ENCODE measurements at regions of chr11 and their contacts with region 1.

Region 1: DNA sequence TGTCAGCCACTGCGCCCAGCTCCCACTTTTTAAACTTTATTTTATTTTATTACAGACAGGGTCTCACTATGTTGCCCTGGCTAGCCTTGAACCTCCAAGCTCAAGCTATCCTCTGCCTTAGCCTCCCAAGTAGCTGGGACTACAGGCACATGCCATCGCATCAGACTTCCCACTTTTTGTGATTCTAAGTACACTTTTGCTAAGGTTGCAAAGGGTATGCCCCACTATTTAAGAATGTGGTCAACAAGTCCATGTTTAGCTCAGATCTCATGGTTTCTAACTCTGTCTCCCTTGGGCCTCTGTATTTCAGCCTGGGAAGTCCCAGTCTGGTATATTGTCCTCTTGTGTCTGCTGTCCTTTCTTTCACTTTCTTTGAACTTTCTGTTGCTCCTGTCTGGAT is 35.3 kb downstream of the EXPH5 start:
- DNase-seq: no peak
- H3K4me3 ChIP-seq: no peak overlapping the region
- H3K27ac ChIP-seq: no peak overlapping the region
- H3K4me1 ChIP-seq: no peaks in the 10 kb centered on the region
- H3K27me3 ChIP-seq: no peaks in the 10 kb centered on the region
- CTCF ChIP-seq: no peak

Region 2: DNA sequence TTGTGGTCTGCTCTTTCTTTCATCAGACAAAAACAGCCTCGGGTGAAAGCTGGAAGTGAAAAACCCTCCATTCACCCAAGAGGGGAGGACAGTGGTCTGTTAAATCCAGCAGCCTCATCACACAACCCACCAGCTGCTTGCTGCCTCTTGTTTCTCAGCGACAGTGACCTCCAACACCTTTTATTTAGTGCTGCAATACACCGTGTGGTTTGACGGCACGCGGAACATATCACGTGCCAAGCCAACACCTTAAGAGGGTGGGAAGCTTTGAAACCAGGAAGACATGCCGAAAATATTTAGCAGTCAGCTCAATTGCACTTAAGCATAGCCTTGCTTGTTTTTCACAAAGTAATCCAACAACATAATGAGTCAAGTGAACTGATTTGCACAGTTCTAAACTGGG is 20.2 kb before region 1 on chr11:
- CTCF ChIA-PET with region 1: no interaction called
- POLR2A ChIA-PET with region 1: interaction called, 12 read pairs
- intact Hi-C with region 1: no loop called
- DNase-seq: peak in 1 of 2 experiments; percentile 23
- H3K4me3 ChIP-seq: no peak overlapping the region
- H3K27ac ChIP-seq: no peak overlapping the region
- H3K4me1 ChIP-seq: no peaks in the 10 kb centered on the region
- H3K27me3 ChIP-seq: no peaks in the 10 kb centered on the region
- CTCF ChIP-seq: no peak

Region 3: GRCh38 chr11:108568195-108568858 is 10.1 kb after region 1 on chr11:
- CTCF ChIA-PET with region 1: no interaction called
- POLR2A ChIA-PET with region 1: interaction called, 12 read pairs
- intact Hi-C with region 1: no loop called
- DNase-seq: no peak
- H3K4me3 ChIP-seq: no peak overlapping the region
- H3K27ac ChIP-seq: no peak overlapping the region
- H3K4me1 ChIP-seq: no peaks in the 10 kb centered on the region; the same call in 1 of the 2 replicates
- H3K27me3 ChIP-seq: no peaks in the 10 kb centered on the region
- CTCF ChIP-seq: no peak

Measured in PC-9 (cell line).